ENCODE measurements at regions of chr15 and their contacts with region 1.

Region 1: DNA sequence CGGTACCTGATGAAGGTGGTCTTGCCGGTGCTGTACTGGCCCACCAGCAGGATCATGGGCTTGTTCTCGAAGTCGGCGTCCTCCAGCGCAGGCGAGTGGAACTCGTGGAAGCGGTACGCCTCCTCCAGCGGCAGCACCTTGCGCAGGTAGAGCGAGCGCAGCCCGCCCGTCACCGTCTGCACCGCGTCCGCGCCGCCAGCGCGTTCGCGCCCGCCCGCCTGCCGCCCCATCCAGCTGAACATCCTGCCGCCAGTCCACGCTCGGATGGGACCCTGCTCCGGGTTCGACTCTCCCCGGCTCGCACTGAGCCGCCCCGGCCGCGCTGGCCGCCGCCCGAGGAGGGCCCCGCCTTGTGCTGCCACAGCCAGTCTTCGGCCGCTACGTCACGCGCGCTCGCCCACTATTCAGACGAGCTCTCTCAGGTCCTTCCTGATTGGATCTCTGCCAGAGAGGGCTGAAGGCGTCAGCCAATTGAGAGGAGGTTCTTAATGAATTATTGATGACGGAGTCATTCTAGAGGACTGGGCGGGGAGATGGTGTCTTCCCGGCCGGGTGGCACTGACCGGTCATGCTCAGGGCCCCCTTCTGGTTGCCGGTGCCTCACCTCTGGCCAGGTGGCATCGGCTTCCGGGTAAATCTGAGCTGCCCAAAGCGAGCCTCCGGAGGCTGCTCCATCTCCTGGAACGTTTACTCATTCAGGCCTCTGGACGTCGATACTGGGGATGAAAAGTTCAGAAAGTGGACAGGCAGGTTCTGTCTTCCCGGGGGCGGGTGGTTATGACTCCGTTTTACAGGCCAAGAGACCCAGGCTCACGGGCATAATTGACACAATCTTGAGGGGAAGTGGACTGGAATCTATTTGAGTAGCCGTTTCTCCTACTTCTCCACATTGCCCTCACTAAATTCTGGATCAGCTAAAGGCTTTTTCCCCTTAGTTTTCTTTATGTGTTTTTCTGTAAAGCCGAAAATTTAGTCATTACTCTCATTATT is at the start of gene EHD4:
- DNase-seq: peak; percentile 88
- ATAC-seq: peak; percentile 84
- H3K4me3 Mint-ChIP-seq: peak within 1 kb of the TSS; percentile 93
- H3K27ac Mint-ChIP-seq: peak within 1 kb of the TSS; percentile 90
- H3K4me1 Mint-ChIP-seq: peaks cover 46% of the 10 kb centered on the region
- H3K27me3 Mint-ChIP-seq: peaks cover 7% of the 10 kb centered on the region
- CTCF ChIP-seq: no peak
- total RNA-seq, gene EHD4: 38.4 and 42.6 TPM in 2 replicates

Region 2: DNA sequence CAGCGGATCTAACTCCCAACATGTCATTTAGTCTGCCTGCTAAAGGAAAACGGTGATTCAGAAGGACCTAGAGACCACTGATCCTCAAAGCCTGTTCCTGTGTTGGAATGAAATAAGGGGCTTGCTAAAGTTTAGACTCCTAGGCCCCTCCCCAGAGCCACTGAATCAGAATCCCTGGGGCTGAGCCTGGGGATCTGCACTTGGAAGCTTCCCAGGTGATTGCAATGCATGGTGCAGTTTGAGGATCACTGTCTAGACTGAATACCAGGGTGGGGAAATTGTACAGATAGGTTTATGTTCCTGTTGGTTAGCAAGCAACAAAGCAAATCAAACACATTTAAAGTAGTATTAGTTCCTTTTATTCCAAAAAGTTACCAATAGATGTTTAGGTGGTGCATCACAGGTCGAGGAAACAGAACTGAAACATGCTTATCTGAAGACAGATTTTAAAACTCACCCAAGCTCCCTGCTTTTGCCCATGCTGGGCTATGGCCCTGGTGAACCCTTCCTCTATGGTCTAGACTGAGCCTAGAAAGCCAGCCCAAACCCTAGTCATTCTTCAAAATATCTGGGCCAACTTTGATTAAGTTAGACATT is 49.0 kb before region 1 on chr15:
- CTCF ChIA-PET with region 1: interaction called, 5 read pairs
- POLR2A ChIA-PET with region 1: interaction called, 92 read pairs
- intact Hi-C with region 1: no loop called
- DNase-seq: no peak
- ATAC-seq: peak; percentile 49
- H3K4me3 Mint-ChIP-seq: peak overlapping the region; percentile 48
- H3K27ac Mint-ChIP-seq: peak overlapping the region; percentile 14
- H3K4me1 Mint-ChIP-seq: peaks cover 81% of the 10 kb centered on the region
- H3K27me3 Mint-ChIP-seq: no peaks in the 10 kb centered on the region
- CTCF ChIP-seq: no peak

Region 3: GRCh38 chr15:41930221-41930866 is 42.2 kb before region 1 on chr15:
- CTCF ChIA-PET with region 1: interaction called, 5 read pairs
- POLR2A ChIA-PET with region 1: interaction called, 92 read pairs
- intact Hi-C with region 1: loop called (anchors 1 kb)
- DNase-seq: no peak
- ATAC-seq: no peak
- H3K4me3 Mint-ChIP-seq: peak overlapping the region; percentile 65
- H3K27ac Mint-ChIP-seq: peak overlapping the region; percentile 88
- H3K4me1 Mint-ChIP-seq: peaks cover 86% of the 10 kb centered on the region
- H3K27me3 Mint-ChIP-seq: no peaks in the 10 kb centered on the region
- CTCF ChIP-seq: no peak

Region 4: GRCh38 chr15:42118650-42119445 is 146.3 kb after region 1 on chr15:
- CTCF ChIA-PET with region 1: no interaction called
- POLR2A ChIA-PET with region 1: no interaction called
- intact Hi-C with region 1: no loop called
- DNase-seq: no peak
- ATAC-seq: no peak
- H3K4me3 Mint-ChIP-seq: no peak overlapping the region
- H3K27ac Mint-ChIP-seq: no peak overlapping the region
- H3K4me1 Mint-ChIP-seq: no peaks in the 10 kb centered on the region
- H3K27me3 Mint-ChIP-seq: peaks cover 4% of the 10 kb centered on the region
- CTCF ChIP-seq: no peak